ENCODE measurements at regions of chr6 and their contacts with region 1.

Region 1: DNA sequence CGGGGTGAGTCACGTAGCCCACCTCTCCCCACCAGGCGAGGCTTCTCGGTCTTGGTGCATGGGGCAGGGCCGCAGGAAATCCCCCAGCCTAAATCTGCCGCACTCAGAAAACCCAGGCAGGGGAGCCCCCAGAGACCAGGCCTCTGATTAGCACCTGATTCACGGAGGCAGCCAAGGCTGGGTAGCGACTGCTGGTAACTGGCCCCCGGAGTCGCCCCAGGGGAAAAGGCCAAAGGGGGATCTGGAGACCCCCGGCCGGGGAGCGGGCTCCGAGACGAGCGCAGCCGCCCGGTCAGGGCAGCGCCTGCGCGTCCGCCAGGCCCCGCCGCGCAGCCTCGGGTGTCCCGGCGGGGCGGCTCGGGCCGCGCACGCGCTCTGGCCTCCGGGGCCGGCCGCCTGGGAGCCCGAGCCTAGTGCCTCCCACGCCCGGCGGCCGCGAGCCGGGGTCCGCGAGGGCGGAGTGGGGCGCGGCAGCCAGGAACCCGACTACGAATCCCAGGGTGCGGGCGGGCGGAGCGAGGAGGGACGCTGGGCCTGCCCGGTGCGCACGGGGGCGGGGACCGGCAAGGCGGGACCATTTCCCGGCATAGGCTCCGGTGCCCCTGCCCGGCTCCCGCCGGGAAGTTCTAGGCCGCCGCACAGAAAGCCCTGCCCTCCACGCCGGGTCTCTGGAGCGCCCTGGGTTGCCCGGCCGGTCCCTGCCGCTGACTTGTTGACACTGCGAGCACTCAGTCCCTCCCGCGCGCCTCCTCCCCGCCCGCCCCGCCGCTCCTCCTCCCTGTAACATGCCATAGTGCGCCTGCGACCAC is at the start of gene DUSP22:
- DNase-seq: peak; percentile 93
- H3K4me3 ChIP-seq: peak within 1 kb of the TSS; percentile 58 to 71 (median 64)
- H3K27ac ChIP-seq: peak within 1 kb of the TSS; percentile 92 to 97 (median 96)
- H3K4me1 ChIP-seq: peaks cover 0 to 26% (median 18%) of the 10 kb centered on the region in 4 donors
- H3K27me3 ChIP-seq: no peaks in the 10 kb centered on the region
- CTCF ChIP-seq: no peak
- EP300 ChIP-seq: peak in 1 of 4 donors; percentile 22
- POLR2A ChIP-seq: peak; percentile 60 to 76
- total RNA-seq, gene DUSP22: 55.6 to 113 (median 80.5) TPM

Region 2: DNA sequence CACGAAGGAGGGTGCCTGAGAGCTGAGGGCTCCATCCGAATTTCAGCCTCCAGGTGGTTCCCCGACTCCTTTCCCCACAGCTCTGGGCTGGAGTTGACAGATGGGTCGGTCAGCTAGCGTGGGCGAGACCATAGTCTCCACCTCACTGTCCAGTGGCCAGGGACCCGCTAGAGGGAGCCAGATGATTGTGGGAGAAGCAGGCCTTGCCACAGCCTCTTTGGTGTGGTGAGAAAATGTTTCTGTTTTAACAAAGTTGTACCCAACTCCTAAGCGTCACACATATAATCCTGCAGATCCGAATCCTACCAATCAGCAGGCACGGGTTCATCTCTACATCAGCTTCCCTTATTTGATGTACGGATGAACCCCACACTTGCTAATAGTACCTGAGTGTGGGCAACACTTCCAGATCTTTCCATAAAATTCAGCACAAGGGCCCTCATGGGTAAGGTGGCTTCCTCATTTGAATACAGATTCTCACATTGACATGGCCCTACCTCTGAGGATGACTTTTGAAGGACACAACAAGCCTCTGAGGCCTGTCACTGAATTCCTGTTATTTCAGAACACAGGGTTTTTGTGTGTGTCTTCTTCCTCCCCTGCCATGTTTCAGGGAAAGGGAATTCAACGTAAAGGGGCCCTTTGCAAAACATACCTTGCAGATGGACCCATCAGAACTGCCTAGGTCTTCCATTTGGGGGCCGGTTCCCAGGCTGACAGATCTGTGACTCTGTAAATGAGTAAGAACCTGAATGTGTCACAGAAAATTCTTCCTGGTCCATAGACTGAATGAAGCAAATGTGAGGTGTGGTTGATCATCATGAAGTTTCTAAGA is 102.9 kb before region 1 on chr6:
- intact Hi-C with region 1: loop called (anchors 5 kb)
- DNase-seq: peak; percentile 91
- H3K4me3 ChIP-seq: no peak overlapping the region
- H3K27ac ChIP-seq: no peak overlapping the region
- H3K4me1 ChIP-seq: peaks cover 0 to 22% (median 15%) of the 10 kb centered on the region in 4 donors
- H3K27me3 ChIP-seq: no peaks in the 10 kb centered on the region
- CTCF ChIP-seq: peak; percentile 54 to 95 (median 68)
- EP300 ChIP-seq: no peak
- POLR2A ChIP-seq: no peak

Region 3: DNA sequence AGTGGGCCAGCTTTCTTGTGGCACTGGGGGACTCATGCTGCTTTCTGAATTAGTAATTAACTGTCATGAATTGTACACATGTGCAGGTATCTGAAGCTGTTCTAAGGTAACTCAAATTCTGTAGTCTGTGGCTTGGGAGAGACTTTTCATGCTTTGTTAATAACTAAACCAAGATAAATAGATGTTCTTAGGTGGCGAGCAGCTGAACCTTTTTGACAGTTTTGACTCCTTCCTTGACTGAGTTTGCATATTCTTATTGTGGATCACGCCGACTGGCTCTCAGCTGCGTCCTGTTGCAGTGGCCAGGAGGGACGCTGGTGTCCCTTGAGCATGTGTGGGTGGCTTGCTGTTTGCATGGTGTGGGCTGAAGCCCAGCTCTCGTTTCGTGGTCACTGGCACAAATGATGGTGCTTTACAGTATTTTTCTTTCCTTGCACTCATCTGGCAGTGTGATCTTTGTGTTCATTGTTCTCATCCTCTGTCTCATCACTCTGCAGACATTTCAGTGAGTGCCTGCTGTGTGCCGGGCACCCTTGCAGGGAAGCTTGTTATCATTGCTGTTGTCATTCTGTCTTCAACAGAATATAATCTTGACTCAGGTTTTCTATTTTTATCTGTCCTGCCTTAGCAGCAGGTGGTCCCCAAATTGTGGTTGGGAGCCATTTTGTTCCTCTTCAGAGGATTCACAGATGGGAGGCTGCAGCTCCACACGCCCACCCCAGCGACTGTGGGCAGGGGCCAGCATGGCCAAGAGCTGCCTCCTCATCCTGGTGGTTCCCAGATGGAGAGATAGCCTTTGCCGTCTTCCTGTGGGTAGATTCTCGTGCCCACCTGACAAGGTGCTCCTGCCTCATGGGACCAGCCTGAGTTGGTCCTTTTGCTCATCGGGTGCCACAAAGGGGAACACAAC is 40.0 kb after region 1 on chr6:
- intact Hi-C with region 1: loop called (anchors 1 kb)
- DNase-seq: no peak
- H3K4me3 ChIP-seq: no peak overlapping the region
- H3K27ac ChIP-seq: peak overlapping the region in 2 of 4 donors; percentile 39 to 69
- H3K4me1 ChIP-seq: peaks cover 0 to 65% (median 48%) of the 10 kb centered on the region in 4 donors
- H3K27me3 ChIP-seq: no peaks in the 10 kb centered on the region
- CTCF ChIP-seq: no peak
- EP300 ChIP-seq: no peak
- POLR2A ChIP-seq: no peak

Region 4: GRCh38 chr6:408599-409102 is 116.8 kb after region 1 on chr6:
- intact Hi-C with region 1: loop called (anchors 5 kb)
- DNase-seq: no peak
- H3K4me3 ChIP-seq: no peak overlapping the region
- H3K27ac ChIP-seq: no peak overlapping the region
- H3K4me1 ChIP-seq: peaks cover 0 to 7% (median 0%) of the 10 kb centered on the region in 4 donors
- H3K27me3 ChIP-seq: peaks cover 0 to 12% (median 0%) of the 10 kb centered on the region in 3 donors
- CTCF ChIP-seq: peak; percentile 39 to 48 (median 47)
- EP300 ChIP-seq: no peak
- POLR2A ChIP-seq: no peak

Region 5: GRCh38 chr6:524803-525202 is 232.9 kb after region 1 on chr6:
- intact Hi-C with region 1: no loop called
- DNase-seq: no peak
- H3K4me3 ChIP-seq: no peak overlapping the region
- H3K27ac ChIP-seq: no peak overlapping the region
- H3K4me1 ChIP-seq: no peaks in the 10 kb centered on the region
- H3K27me3 ChIP-seq: no peaks in the 10 kb centered on the region
- CTCF ChIP-seq: no peak
- EP300 ChIP-seq: no peak
- POLR2A ChIP-seq: no peak

Region 6: DNA sequence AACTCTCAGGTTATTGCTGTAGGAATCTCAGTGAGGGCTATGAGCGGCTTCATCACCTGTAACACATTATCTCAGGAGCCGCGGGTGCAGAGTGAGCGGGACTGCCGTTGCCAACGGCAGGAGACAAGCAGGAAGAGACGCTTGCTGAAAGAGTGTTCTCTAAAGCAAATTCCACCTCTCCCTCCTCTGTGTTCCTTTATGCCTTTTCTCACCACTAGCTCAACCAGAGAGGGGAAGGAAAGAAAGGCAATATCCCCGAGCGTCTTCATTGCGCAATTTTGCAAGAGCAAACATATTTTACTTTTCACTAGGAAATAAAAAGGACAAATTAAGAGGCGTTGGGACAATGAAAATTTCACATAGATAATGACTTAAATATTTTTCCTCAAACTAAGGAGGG is 586.3 kb after region 1 on chr6:
- intact Hi-C with region 1: no loop called
- DNase-seq: no peak
- H3K4me3 ChIP-seq: no peak overlapping the region
- H3K27ac ChIP-seq: no peak overlapping the region
- H3K4me1 ChIP-seq: no peaks in the 10 kb centered on the region
- H3K27me3 ChIP-seq: no peaks in the 10 kb centered on the region
- CTCF ChIP-seq: no peak
- EP300 ChIP-seq: no peak
- POLR2A ChIP-seq: no peak

Measured in sigmoid colon (tissue), 7 donors.